Caco-2 (cell line): ENCODE measurements at regions of chr9 and their contacts with region 1.

Region 1: GRCh38 chr9:101530077-101530711 is 3.5 kb upstream of the RNF20 start:
- DNase-seq: peak; percentile 71 to 81
- H3K4me3 ChIP-seq: no peak overlapping the region
- H3K4me3 Mint-ChIP-seq: no peak overlapping the region
- H3K27ac Mint-ChIP-seq: no peak overlapping the region
- H3K4me1 ChIP-seq: no peaks in the 10 kb centered on the region
- H3K4me1 Mint-ChIP-seq: no peaks in the 10 kb centered on the region
- H3K27me3 ChIP-seq: no peaks in the 10 kb centered on the region
- H3K27me3 Mint-ChIP-seq: no peaks in the 10 kb centered on the region
- CTCF ChIP-seq: peak; percentile 80 to 82

Region 2: DNA sequence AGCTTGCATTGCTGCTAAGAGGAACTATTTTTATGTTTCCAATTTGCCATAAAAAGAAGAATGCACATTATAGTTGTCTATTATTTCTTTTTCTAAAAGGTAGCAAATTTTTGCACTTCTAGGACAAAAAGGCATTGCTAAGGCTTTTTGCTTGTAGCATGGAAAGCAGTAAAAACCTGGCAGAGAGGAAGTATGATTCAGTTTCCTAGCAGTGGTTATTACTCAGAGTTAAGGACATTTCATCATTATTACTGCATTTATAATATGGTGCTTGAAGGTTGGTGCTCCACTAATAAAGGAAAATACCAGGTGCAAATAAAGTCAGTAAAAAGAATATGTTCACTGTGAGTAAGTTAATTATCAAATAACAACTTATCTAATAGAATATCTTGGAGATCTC is 681.5 kb before region 1 on chr9:
- CTCF ChIA-PET with region 1: no interaction called
- POLR2A ChIA-PET with region 1: no interaction called
- intact Hi-C with region 1: no loop called
- DNase-seq: no peak
- H3K4me3 ChIP-seq: no peak overlapping the region
- H3K4me3 Mint-ChIP-seq: no peak overlapping the region
- H3K27ac Mint-ChIP-seq: no peak overlapping the region
- H3K4me1 ChIP-seq: no peaks in the 10 kb centered on the region
- H3K4me1 Mint-ChIP-seq: no peaks in the 10 kb centered on the region
- H3K27me3 ChIP-seq: no peaks in the 10 kb centered on the region
- H3K27me3 Mint-ChIP-seq: peaks cover 6% of the 10 kb centered on the region
- CTCF ChIP-seq: no peak

Region 3: GRCh38 chr9:101449140-101449721 is 81.0 kb before region 1 on chr9:
- CTCF ChIA-PET with region 1: interaction called, 21 read pairs
- POLR2A ChIA-PET with region 1: no interaction called
- intact Hi-C with region 1: loop called (anchors 1 kb)
- DNase-seq: peak; percentile 88 to 90
- H3K4me3 ChIP-seq: peak overlapping the region; percentile 59
- H3K4me3 Mint-ChIP-seq: peak overlapping the region; percentile 72
- H3K27ac Mint-ChIP-seq: peak overlapping the region; percentile 70
- H3K4me1 ChIP-seq: peaks cover 6% of the 10 kb centered on the region; the same call in 1 of the 2 replicates
- H3K4me1 Mint-ChIP-seq: peaks cover 16% of the 10 kb centered on the region
- H3K27me3 ChIP-seq: no peaks in the 10 kb centered on the region
- H3K27me3 Mint-ChIP-seq: no peaks in the 10 kb centered on the region
- CTCF ChIP-seq: peak; percentile 59 to 82

Region 4: DNA sequence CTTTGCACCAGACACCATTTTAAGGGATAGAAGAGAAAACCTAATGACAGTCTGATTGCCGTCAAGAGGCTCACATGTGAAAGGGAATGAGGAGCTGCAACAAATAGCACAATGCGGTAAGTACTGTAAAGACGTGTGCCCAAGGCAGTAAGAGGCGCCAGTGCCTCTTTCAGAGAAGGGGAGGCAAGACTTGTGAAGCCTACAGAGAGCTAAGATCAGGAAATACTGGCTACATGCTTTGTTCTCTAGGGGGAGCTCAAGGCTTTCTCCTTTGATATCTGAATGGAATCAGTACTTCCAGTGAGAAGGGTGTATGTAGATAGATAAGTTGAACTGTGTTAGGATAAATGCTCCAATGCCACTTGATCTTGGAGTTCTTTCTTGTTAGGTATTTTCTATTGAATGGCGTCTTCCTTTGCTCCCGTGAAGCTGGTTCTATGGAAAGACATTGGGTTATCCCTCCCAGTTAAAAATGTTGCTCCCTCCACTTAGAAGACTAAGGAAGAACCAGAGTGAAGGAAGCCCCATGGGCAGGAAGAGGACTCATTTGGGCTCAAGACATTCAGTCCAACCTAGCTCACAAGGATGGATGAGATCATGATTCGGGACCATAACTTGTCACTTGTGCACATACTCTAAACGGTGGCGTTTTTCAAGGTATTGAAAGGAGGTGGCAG is 71.1 kb before region 1 on chr9:
- CTCF ChIA-PET with region 1: interaction called, 34 read pairs
- POLR2A ChIA-PET with region 1: no interaction called
- intact Hi-C with region 1: loop called (anchors 1 kb)
- DNase-seq: peak; percentile 37 to 56
- H3K4me3 ChIP-seq: no peak overlapping the region
- H3K4me3 Mint-ChIP-seq: no peak overlapping the region
- H3K27ac Mint-ChIP-seq: no peak overlapping the region
- H3K4me1 ChIP-seq: peaks cover 2% of the 10 kb centered on the region; the same call in 1 of the 2 replicates
- H3K4me1 Mint-ChIP-seq: peaks cover 6% of the 10 kb centered on the region
- H3K27me3 ChIP-seq: no peaks in the 10 kb centered on the region
- H3K27me3 Mint-ChIP-seq: no peaks in the 10 kb centered on the region
- CTCF ChIP-seq: peak; percentile 52 to 69

Region 5: GRCh38 chr9:101465392-101465791 is 64.8 kb before region 1 on chr9:
- CTCF ChIA-PET with region 1: interaction called, 5 read pairs
- POLR2A ChIA-PET with region 1: no interaction called
- intact Hi-C with region 1: loop called (anchors 1 kb)
- DNase-seq: peak; percentile 64 to 65
- H3K4me3 ChIP-seq: no peak overlapping the region
- H3K4me3 Mint-ChIP-seq: no peak overlapping the region
- H3K27ac Mint-ChIP-seq: no peak overlapping the region
- H3K4me1 ChIP-seq: peaks cover 2% of the 10 kb centered on the region; the same call in 1 of the 2 replicates
- H3K4me1 Mint-ChIP-seq: peaks cover 13% of the 10 kb centered on the region
- H3K27me3 ChIP-seq: no peaks in the 10 kb centered on the region; the same call in 1 of the 2 replicates
- H3K27me3 Mint-ChIP-seq: no peaks in the 10 kb centered on the region
- CTCF ChIP-seq: peak; percentile 54 to 62

Region 6: GRCh38 chr9:101486693-101487442 is 43.3 kb before region 1 on chr9:
- CTCF ChIA-PET with region 1: interaction called, 4 read pairs
- POLR2A ChIA-PET with region 1: no interaction called
- intact Hi-C with region 1: loop called (anchors 5 kb)
- DNase-seq: peak; percentile 38 to 56
- H3K4me3 ChIP-seq: peak overlapping the region; percentile 36
- H3K4me3 Mint-ChIP-seq: peak overlapping the region; percentile 93
- H3K27ac Mint-ChIP-seq: peak overlapping the region; percentile 71
- H3K4me1 ChIP-seq: peaks cover 4% of the 10 kb centered on the region
- H3K4me1 Mint-ChIP-seq: peaks cover 6% of the 10 kb centered on the region
- H3K27me3 ChIP-seq: no peaks in the 10 kb centered on the region; the same call in 1 of the 2 replicates
- H3K27me3 Mint-ChIP-seq: peaks cover 10% of the 10 kb centered on the region
- CTCF ChIP-seq: no peak

Region 7: DNA sequence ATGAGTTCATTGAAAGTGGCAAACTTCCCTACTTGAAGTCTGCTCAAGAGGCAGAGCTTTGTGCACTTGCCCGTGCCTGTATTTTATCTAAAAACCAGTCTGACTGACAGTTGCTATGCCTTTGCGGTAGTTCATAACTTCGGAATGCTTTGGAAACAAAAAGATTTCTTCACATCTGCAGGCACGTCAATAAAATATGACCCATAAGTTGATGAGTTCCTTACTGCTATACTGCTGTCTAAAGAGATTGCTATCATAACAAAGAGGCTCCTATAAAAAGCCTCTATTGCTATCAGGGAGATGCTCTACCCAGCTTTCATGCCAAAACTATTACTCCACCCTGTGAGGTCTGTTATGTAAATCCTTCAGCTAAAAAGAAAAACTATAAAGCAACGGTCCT is 22.0 kb before region 1 on chr9:
- CTCF ChIA-PET with region 1: interaction called, 6 read pairs
- POLR2A ChIA-PET with region 1: no interaction called
- intact Hi-C with region 1: loop called (anchors 1 kb)
- DNase-seq: no peak
- H3K4me3 ChIP-seq: no peak overlapping the region
- H3K4me3 Mint-ChIP-seq: no peak overlapping the region
- H3K27ac Mint-ChIP-seq: no peak overlapping the region
- H3K4me1 ChIP-seq: peaks cover 9% of the 10 kb centered on the region; the same call in 1 of the 2 replicates
- H3K4me1 Mint-ChIP-seq: peaks cover under 1% of the 10 kb centered on the region
- H3K27me3 ChIP-seq: no peaks in the 10 kb centered on the region
- H3K27me3 Mint-ChIP-seq: no peaks in the 10 kb centered on the region
- CTCF ChIP-seq: no peak

Region 8: DNA sequence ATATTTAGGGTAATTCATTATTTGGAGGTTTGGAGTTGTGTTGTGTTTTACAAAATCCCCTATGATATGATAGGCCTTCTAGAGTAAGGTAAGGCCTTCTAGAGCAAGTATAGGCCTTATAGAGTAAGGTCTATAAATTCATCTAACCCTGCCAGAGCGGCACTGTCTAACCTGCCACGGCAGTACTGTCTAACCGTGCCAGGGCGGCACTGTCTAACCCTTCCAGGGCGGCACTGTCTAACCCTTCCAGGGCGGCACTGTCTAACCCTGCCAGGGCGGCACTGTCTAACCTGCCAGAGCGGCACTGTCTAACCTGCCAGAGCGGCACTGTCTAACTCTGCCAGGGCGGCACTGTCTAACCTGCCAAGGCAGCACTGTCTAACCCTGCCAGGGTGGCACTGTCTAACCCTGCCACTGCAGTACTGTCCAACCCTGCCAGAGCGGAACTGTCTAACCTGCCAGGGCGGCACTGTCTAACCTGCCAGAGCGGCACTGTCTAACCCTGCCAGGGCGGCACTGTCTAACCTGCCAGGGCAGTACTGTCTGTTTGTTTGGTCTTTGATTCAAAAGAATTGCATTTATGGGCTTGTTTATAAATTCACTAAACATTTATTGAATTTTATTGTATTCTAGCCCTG is 13.0 kb after region 1 on chr9:
- CTCF ChIA-PET with region 1: no interaction called
- POLR2A ChIA-PET with region 1: no interaction called
- intact Hi-C with region 1: no loop called
- DNase-seq: no peak
- H3K4me3 ChIP-seq: no peak overlapping the region
- H3K4me3 Mint-ChIP-seq: no peak overlapping the region
- H3K27ac Mint-ChIP-seq: no peak overlapping the region
- H3K4me1 ChIP-seq: no peaks in the 10 kb centered on the region
- H3K4me1 Mint-ChIP-seq: no peaks in the 10 kb centered on the region
- H3K27me3 ChIP-seq: no peaks in the 10 kb centered on the region
- H3K27me3 Mint-ChIP-seq: no peaks in the 10 kb centered on the region
- CTCF ChIP-seq: no peak

Region 9: DNA sequence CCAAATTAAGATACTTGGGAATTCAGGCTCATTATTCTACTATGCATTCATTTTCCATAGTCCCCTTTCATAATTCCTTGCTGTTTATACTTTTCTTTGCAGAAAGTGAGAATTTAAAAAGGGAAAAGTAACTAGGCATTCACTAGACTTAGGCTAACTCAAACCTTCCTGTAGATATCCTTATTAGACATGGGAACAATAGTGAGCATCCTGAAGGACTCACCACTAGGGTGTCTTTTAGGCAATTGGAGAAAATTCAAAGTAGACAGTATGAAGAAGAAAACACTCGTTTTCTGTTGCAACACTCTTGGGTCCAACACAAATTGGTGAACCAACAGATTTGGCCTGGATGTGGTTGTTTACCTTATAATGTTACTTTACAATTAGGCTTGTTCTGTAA is 421.4 kb after region 1 on chr9:
- CTCF ChIA-PET with region 1: no interaction called
- POLR2A ChIA-PET with region 1: no interaction called
- intact Hi-C with region 1: no loop called
- DNase-seq: no peak
- H3K4me3 ChIP-seq: no peak overlapping the region
- H3K4me3 Mint-ChIP-seq: no peak overlapping the region
- H3K27ac Mint-ChIP-seq: no peak overlapping the region
- H3K4me1 ChIP-seq: no peaks in the 10 kb centered on the region
- H3K4me1 Mint-ChIP-seq: no peaks in the 10 kb centered on the region
- H3K27me3 ChIP-seq: no peaks in the 10 kb centered on the region
- H3K27me3 Mint-ChIP-seq: peaks cover 2% of the 10 kb centered on the region
- CTCF ChIP-seq: no peak